ENCODE measurements at regions of chr6 and their contacts with region 1.

Region 1: GRCh38 chr6:32838114-32838958 is at the start of gene TAP2:
- DNase-seq: peak; percentile 91
- H3K4me3 Mint-ChIP-seq: peak within 1 kb of the TSS; percentile 77
- H3K27ac Mint-ChIP-seq: peak within 1 kb of the TSS; percentile 29
- H3K4me1 Mint-ChIP-seq: peaks cover 34% of the 10 kb centered on the region
- H3K27me3 Mint-ChIP-seq: no peaks in the 10 kb centered on the region
- CTCF ChIP-seq: peak; percentile 96
- total RNA-seq, gene TAP2: 43.3 and 61.2 TPM in 2 replicates

Region 2: DNA sequence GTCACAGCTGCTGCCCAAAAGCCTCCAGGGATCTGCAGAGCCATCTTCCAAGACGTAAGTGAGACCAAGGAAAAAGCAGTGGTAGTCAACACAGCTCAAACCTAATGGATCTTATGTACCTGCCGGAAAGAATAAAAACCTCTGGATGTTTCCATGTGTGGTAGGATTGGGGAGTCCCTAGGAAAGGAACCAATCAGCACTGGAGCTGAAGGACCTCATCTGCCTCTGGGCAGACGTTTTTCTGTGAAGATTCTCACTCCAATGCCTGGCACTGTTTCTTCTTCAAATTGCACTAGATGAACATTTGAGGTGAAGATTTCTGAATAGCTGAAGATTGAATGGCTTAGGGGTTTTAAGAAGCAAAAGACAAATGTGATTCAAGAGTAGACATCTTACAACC is 74.9 kb before region 1 on chr6 and contains the start of gene HLA-DQB2:
- CTCF ChIA-PET with region 1: no interaction called
- POLR2A ChIA-PET with region 1: no interaction called
- intact Hi-C with region 1: no loop called
- DNase-seq: peak; percentile 10
- H3K4me3 Mint-ChIP-seq: no peak within 1 kb of the TSS
- H3K27ac Mint-ChIP-seq: no peak within 1 kb of the TSS
- H3K4me1 Mint-ChIP-seq: no peaks in the 10 kb centered on the region
- H3K27me3 Mint-ChIP-seq: peaks cover 100% of the 10 kb centered on the region
- CTCF ChIP-seq: no peak
- total RNA-seq, gene HLA-DQB2: not detected in 2 replicates

Region 3: DNA sequence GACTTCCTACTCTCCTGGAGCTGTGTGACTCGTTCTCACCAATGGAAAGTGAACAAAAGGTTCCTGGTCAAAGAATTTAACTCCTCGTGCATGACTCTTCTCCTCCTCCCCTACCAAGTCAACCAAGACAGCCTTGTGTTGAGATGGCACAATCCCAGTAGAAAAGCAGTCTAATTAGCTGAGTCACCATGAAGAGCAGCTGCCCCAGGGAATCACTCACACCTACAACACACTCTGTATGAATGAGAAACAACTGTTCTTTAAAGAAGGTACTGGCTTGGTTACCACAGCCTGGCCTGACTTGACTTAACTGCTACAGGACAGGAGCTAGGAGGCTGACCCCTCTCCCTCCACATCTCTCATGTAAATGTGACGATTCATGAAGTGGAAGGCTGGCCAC is 18.6 kb before region 1 on chr6:
- CTCF ChIA-PET with region 1: interaction called, 25 read pairs
- POLR2A ChIA-PET with region 1: interaction called, 28 read pairs
- intact Hi-C with region 1: no loop called
- DNase-seq: peak; percentile 87
- H3K4me3 Mint-ChIP-seq: no peak overlapping the region
- H3K27ac Mint-ChIP-seq: peak overlapping the region; percentile 60
- H3K4me1 Mint-ChIP-seq: peaks cover 20% of the 10 kb centered on the region
- H3K27me3 Mint-ChIP-seq: no peaks in the 10 kb centered on the region
- CTCF ChIP-seq: no peak

Region 4: GRCh38 chr6:32825966-32826365 is 12.4 kb before region 1 on chr6:
- CTCF ChIA-PET with region 1: interaction called, 63 read pairs
- POLR2A ChIA-PET with region 1: interaction called, 28 read pairs
- intact Hi-C with region 1: loop called (anchors 1 kb)
- DNase-seq: peak; percentile 87
- H3K4me3 Mint-ChIP-seq: no peak overlapping the region
- H3K27ac Mint-ChIP-seq: peak overlapping the region; percentile 49
- H3K4me1 Mint-ChIP-seq: peaks cover 7% of the 10 kb centered on the region
- H3K27me3 Mint-ChIP-seq: no peaks in the 10 kb centered on the region
- CTCF ChIP-seq: peak; percentile 42

Region 5: DNA sequence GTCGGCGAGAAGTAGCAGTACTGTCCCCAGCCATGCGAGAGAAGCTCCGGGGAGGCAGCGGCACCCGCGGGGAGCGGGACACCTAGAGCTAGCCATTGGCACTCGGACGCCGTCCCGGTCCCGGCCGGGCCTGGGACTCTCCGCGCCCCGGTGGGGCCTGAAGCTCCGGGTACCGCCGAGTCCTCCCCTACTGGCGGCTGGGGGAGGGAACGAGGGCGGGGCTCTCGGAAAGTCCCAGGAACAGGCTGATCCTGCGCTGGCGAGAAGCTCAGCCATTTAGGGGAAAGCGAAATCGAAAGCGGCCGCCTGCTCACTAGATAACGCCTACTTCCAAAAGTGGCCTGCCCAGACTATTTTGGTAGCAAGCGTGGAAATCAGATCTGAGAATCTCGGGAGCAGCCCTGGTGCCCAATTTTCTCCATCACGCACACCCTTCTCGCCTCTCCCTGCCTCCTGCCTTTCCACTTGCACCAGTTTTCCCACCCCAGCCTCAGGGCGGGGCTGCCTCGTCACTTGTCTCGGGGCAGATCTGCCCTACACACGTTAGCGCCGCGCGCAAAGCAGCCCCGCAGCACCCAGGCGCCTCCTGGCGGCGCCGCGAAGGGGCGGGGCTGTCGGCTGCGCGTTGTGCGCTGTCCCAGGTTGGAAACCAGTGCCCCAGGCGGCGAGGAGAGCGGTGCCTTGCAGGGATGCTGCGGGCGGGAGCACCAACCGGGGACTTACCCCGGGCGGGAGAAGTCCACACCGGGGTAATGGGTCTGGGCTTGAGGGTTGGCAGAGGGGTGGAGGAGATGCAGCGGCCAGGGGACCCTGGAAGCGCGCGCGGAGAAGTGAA is 15.4 kb after region 1 on chr6 and contains the starts of genes PSMB9 and TAP1:
- CTCF ChIA-PET with region 1: interaction called, 110 read pairs
- POLR2A ChIA-PET with region 1: interaction called, 111 read pairs
- intact Hi-C with region 1: loop called (anchors 1 kb)
- DNase-seq: peak; percentile 94
- H3K4me3 Mint-ChIP-seq: peak within 1 kb of the TSS; percentile 99
- H3K27ac Mint-ChIP-seq: peak within 1 kb of the TSS; percentile 94
- H3K4me1 Mint-ChIP-seq: peaks cover 21% of the 10 kb centered on the region
- H3K27me3 Mint-ChIP-seq: no peaks in the 10 kb centered on the region
- CTCF ChIP-seq: peak; percentile 51
- total RNA-seq, gene PSMB9: 3.5 and 4.4 TPM in 2 replicates
- total RNA-seq, gene TAP1: 32.3 and 35.2 TPM in 2 replicates

Region 6: GRCh38 chr6:32862725-32863124 is 24.4 kb after region 1 on chr6:
- CTCF ChIA-PET with region 1: interaction called, 110 read pairs
- POLR2A ChIA-PET with region 1: interaction called, 111 read pairs
- intact Hi-C with region 1: no loop called
- DNase-seq: no peak
- H3K4me3 Mint-ChIP-seq: no peak overlapping the region
- H3K27ac Mint-ChIP-seq: no peak overlapping the region
- H3K4me1 Mint-ChIP-seq: peaks cover 14% of the 10 kb centered on the region
- H3K27me3 Mint-ChIP-seq: no peaks in the 10 kb centered on the region
- CTCF ChIP-seq: no peak

Region 7: GRCh38 chr6:33075568-33076405 is 237.5 kb after region 1 on chr6 and contains the start of gene HLA-DPB1:
- CTCF ChIA-PET with region 1: no interaction called
- POLR2A ChIA-PET with region 1: no interaction called
- intact Hi-C with region 1: no loop called
- DNase-seq: peak; percentile 64
- H3K4me3 Mint-ChIP-seq: no peak within 1 kb of the TSS
- H3K27ac Mint-ChIP-seq: no peak within 1 kb of the TSS
- H3K4me1 Mint-ChIP-seq: no peaks in the 10 kb centered on the region
- H3K27me3 Mint-ChIP-seq: peaks cover 89% of the 10 kb centered on the region
- CTCF ChIP-seq: no peak
- total RNA-seq, gene HLA-DPB1: not detected in 2 replicates

Region 8: GRCh38 chr6:33213166-33213988 is 375.0 kb after region 1 on chr6:
- CTCF ChIA-PET with region 1: no interaction called
- POLR2A ChIA-PET with region 1: no interaction called
- intact Hi-C with region 1: no loop called
- DNase-seq: no peak
- H3K4me3 Mint-ChIP-seq: peak overlapping the region; percentile 50
- H3K27ac Mint-ChIP-seq: no peak overlapping the region
- H3K4me1 Mint-ChIP-seq: peaks cover 31% of the 10 kb centered on the region
- H3K27me3 Mint-ChIP-seq: peaks cover 48% of the 10 kb centered on the region
- CTCF ChIP-seq: no peak